ENCODE measurements at regions of chr18 and their contacts with region 1.

Region 1: DNA sequence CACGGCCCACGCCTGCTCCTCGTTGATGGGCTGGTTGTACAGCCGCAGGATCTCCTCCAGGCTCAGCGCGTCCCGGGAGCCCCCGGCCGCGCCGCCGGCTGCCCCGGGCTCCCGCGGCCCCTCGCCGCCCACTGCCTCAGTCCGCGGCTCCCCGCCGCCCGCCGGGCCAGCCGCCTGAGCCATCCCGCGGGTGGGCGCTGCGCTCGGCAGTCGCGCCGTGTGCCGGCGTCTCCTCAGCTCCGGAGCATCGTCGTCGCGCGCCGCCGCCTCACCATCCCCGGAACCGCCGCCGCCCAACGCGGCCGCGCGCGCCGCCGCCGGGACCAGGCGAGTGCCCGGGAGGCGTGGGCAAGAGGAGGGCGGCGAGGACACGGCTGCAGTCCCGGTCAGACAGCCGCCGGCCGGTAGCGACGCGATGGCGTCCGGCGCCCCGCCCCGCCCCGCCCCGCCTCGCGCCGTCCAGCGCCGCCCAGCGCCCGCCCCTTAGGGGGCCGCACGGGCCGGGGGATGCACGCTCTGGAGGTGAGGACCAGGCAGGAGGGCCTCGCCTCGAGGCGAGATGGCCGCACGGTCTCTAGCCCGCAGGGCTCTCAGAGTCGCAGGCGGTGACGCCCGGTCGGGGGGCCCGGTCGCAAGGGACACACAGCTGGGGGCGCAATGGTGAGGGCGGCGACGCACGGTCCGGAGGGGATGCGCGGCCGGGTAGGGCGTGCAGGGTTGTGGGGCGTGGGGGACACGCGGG is at the start of gene SPIRE1:
- DNase-seq: peak; percentile 89
- ATAC-seq: peak; percentile 91
- total RNA-seq, gene SPIRE1: 41.0 TPM

Region 2: DNA sequence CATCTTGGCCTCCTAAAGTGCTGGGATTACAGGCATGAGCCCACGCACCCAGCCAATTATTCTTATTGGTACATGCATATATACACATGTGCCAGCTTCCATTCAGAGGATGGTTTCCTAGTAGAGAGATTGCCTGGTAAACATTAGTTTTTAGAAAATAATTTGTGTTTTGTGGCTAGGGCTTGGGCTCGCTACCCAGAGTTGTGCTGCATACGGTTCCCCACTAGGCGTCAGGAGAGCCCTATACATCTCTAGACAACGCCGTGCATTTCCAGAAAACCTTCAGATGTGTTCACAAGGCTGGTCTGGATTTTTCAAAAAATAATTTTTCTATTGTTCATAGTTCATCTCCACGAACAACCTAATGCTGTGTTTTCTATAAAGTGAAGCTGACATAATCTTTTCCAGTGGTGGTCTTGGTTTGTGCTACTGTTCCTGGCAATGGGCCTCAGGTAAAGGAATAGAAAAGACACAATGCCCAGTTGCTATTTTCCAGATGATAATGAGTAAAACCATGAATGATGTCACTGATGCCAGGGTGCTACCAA is 266.2 kb before region 1 on chr18:
- intact Hi-C with region 1: loop called (anchors 5 kb)
- DNase-seq: peak; percentile 55
- ATAC-seq: peak; percentile 96

Region 3: GRCh38 chr18:12531749-12532148 is 126.1 kb before region 1 on chr18:
- intact Hi-C with region 1: loop called (anchors 10 kb)
- DNase-seq: no peak
- ATAC-seq: no peak

Measured in left ventricle myocardium superior (tissue), 1 donor.